Gastrocnemius medialis (tissue), 4 donors: ENCODE measurements at regions of chr2 and their contacts with region 1.

Region 1: DNA sequence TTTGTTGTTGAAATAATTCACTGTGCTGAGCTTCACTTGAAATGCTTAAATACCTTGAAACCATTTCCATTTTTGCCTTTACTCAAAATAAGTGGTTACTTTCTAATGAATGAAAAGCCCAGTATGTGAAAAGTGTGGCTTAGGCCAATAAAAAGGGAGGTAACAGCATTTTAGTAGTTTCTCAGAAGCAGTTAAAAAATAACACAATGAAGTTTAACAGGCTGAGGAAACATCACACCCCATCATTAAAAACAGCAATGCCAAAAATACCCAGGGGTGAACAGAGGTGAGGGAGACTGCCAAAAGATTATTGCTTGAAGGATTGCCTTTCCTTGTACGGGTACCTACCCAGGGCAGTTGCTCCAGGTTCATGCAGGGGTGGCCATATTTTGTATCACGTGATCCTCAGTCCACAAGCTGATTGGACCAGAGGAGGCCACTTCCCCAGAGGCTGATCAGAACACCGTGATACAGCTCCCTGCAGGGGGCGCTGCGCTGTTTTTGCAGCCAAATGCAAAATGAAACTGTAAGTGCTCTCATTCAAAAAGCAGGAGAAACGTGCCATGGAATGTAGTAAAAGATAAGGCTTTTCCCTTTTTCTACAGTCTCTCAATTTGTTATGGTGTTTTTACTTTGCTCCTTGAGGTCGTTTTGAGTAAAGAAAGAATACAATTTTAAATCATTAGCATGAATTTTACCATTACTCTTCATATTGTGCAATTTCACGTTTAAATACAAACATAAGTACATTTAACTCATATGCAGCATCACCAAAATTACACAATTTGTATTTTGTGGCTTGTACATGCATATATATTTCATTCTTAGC is 70.2 kb upstream of the SH3BP4 start:
- DNase-seq: peak in 1 of 2 donors; percentile 58
- ATAC-seq: peak in 1 of 2 donors; percentile 84
- H3K4me3 ChIP-seq: peak overlapping the region in 1 of 4 donors; percentile 22
- H3K27ac ChIP-seq: no peak overlapping the region
- H3K4me1 ChIP-seq: peaks cover 0 to 12% of the 10 kb centered on the region in 2 donors
- H3K27me3 ChIP-seq: no peaks in the 10 kb centered on the region
- CTCF ChIP-seq: peak in 4 of 5 experiments; percentile 22 to 59 (median 36)
- POLR2A ChIP-seq: no peak

Region 2: DNA sequence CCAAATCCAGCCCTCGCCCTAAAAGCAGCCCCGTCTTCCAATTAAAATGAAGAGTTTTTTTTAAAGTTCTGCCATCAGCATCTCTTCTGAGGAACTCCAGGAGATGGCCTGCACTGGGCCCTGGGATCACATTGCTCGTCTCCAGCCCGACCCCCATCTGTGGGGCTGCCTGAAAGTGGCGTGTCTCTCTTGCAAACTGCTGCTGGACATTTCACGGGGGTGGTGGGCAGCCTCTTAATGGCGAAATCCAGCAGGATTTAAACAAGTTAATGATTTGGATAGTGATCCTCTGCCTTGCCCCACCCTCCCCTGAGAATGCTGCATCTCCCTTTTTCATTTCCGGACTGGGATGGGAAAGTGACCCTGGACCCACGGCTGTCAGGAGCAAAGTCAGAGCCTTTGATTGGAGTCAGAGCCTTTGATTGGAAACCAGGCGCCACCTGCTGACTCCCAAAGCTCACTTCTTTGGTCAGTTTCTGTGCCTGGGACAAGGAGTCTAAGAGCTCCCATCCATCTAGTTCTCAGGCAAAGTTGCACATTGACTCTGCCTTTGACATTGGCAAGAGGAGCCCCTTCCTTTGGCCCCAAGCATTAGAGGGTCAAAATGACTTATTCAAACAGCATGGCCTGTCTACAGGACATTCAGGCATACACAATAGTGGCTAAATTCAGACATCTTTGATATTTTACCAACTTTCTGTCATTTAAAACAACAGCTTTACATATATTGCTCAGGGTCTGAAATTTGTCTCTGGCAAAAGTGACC is 225.4 kb after region 1 on chr2:
- in situ Hi-C with region 1: no loop called
- intact Hi-C with region 1: loop called (anchors 10 kb)
- DNase-seq: peak in 1 of 2 donors; percentile 26
- ATAC-seq: peak in 1 of 2 donors; percentile 58
- H3K4me3 ChIP-seq: no peak overlapping the region
- H3K27ac ChIP-seq: no peak overlapping the region
- H3K4me1 ChIP-seq: no peaks in the 10 kb centered on the region
- H3K27me3 ChIP-seq: no peaks in the 10 kb centered on the region
- CTCF ChIP-seq: peak; percentile 37 to 58 (median 55)
- POLR2A ChIP-seq: no peak